ENCODE measurements at regions of chr9 and their contacts with region 1.

Region 1: DNA sequence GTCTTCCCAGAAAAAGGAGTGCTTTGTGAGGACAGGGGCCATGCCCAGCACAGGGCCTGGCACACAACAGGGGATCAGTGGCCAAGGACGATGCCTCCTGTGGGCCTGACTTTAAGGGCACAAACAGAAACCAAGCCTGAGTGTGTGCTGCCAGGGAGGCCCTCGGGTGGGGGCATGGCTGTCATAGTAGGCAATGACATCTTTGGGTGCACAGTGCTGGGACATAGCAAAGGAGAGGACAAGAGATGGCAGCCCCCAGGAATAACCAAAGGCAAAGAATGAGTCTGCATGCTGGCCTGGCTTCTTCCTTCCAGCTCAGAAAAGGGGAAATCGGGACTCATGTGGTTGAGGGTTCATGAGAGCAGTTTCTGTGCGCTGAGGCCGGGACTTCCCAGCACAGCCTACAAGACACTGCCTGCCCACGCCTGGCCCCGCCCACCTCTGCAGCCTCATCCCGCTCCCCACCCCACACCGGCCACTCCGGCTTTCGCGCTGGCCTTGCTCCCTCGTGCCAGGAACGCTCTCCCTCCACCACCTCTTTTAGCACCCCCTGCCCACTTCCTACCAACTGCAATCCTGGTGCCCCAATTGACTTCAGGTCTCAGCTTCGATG is 13.8 kb upstream of the LHX2 start:
- DNase-seq: no peak
- H3K4me3 ChIP-seq: no peak overlapping the region
- H3K27ac ChIP-seq: no peak overlapping the region
- H3K4me1 ChIP-seq: no peaks in the 10 kb centered on the region
- H3K27me3 ChIP-seq: peaks cover 80% of the 10 kb centered on the region
- CTCF ChIP-seq: no peak

Region 2: DNA sequence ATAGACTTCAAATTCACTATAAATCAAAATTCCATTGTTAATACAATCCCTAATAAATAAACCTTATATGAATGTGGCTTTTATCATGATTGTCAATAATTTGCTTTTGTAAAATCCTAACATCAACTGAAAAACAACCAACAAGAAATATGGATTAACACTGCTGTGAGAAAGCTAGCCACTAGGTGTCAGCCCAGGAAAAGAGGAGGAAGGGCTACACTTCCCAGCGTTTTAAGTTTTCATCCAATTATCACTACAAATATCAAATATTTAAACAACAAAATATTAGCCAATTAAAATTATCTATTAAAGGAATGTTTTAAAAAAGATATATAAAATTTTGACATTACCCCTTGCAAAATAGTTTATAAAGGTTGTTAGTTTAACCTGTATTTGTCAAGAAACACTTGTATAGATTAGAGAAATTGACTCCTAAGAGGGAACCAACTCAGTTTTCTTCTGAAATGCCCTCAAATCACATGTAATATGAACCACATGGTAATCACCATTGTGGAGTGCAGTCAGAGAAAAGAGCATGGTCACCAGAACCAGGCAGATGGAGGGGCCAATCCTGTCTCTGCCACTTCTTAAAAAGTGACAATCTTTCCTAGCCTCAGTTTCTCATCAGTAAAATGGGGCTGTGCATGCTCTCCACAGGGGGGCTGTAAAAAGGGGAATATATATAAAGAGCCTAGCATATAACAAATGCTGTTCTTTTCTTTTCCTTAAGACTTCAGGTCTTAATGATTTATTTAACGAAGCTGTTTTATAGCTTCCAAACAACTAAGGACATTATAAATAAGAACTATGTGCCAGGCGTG is 453.6 kb before region 1 on chr9:
- CTCF ChIA-PET with region 1: no interaction called
- POLR2A ChIA-PET with region 1: no interaction called
- intact Hi-C with region 1: no loop called
- DNase-seq: peak in 1 of 2 experiments; percentile 15
- H3K4me3 ChIP-seq: no peak overlapping the region
- H3K27ac ChIP-seq: no peak overlapping the region
- H3K4me1 ChIP-seq: no peaks in the 10 kb centered on the region
- H3K27me3 ChIP-seq: no peaks in the 10 kb centered on the region
- CTCF ChIP-seq: peak; percentile 89

Region 3: DNA sequence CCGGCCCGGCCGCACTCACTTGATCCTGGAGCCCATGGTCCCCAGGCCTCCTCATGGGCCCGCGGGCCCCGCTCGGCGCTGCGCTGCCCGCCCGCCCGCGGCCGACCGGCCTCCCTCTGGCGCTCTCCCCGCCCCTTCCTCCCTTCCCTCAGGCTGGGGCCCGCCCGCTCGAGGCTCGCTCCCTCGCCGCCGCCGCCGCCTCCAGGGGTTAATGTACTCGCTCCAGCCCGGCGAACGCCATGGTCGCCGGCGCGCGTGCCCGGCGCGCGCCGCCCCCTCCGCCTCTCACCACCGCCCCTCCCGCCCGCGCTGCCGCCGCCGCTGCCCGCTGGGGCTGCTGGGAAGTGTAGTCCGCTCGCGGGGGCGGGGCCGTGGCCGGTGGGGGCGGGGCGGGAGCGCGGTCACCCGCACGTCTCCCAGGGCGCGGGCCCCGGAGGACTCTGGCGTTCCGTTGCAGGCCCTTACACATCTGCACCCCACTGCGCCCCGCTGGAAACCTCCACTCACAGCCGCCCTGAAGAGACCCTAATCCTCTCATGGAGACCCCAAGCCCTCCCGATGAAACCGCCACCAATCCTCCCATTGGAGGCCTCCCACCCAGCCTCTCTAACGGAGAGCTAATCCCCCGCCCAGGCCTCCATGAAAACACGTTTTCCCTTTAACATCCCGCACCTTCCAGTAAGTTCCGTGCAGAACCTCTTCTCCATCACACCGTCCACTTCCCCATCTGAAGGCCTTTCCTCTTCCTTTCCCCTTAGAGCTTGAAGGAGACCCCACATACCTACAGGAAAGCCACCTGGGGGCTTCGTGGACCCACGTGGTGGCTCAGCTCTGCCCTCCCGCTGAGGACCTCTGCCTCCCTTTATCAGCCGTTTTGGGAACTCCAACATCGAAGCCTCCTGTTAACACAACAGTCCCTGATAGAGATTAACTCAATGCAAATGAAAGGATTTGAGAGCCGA is 67.6 kb before region 1 on chr9 and contains the start of gene DENND1A:
- CTCF ChIA-PET with region 1: no interaction called
- POLR2A ChIA-PET with region 1: no interaction called
- intact Hi-C with region 1: no loop called
- DNase-seq: peak; percentile 58 to 92
- H3K4me3 ChIP-seq: peak within 1 kb of the TSS; percentile 85
- H3K27ac ChIP-seq: peak within 1 kb of the TSS; percentile 75
- H3K4me1 ChIP-seq: peaks cover 64% of the 10 kb centered on the region
- H3K27me3 ChIP-seq: no peaks in the 10 kb centered on the region
- CTCF ChIP-seq: no peak
- total RNA-seq, gene DENND1A: 26.8 and 37.7 TPM in 2 replicates

Region 4: GRCh38 chr9:123974471-123974870 is 23.3 kb before region 1 on chr9:
- CTCF ChIA-PET with region 1: no interaction called
- POLR2A ChIA-PET with region 1: no interaction called
- intact Hi-C with region 1: loop called (anchors 2 kb)
- DNase-seq: no peak
- H3K4me3 ChIP-seq: no peak overlapping the region
- H3K27ac ChIP-seq: no peak overlapping the region
- H3K4me1 ChIP-seq: no peaks in the 10 kb centered on the region
- H3K27me3 ChIP-seq: peaks cover 52% of the 10 kb centered on the region
- CTCF ChIP-seq: no peak